Left ventricle myocardium superior (tissue), 1 donor: ENCODE measurements at regions of chr21 and their contacts with region 1.

Region 1: GRCh38 chr21:38805328-38806152 is at the start of gene ETS2:
- DNase-seq: peak; percentile 93
- ATAC-seq: peak; percentile 94
- total RNA-seq, gene ETS2: 43.8 TPM

Region 2: DNA sequence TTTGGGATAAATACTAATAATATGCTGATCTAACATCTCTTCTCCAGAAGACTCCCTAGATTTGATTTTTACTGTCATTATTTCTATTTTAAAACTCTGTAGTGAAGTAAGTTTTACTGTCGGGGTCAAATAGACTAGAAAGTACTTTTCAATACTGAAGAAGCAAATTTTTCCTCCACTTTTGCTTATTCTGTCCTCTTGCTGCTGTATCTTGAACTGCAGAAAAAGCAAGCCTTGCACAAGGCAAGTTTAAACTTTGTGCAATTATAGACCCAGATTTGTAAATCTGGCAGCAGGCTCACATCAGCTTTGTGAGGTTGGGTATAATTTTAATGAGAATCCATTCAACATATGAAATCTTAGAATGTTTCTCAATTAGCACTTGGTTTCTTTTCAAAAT is 151.0 kb before region 1 on chr21:
- intact Hi-C with region 1: no loop called
- DNase-seq: no peak
- ATAC-seq: no peak

Region 3: GRCh38 chr21:38743761-38744529 is 61.6 kb before region 1 on chr21:
- intact Hi-C with region 1: loop called (anchors 10 kb)
- DNase-seq: no peak
- ATAC-seq: peak; percentile 67

Region 4: DNA sequence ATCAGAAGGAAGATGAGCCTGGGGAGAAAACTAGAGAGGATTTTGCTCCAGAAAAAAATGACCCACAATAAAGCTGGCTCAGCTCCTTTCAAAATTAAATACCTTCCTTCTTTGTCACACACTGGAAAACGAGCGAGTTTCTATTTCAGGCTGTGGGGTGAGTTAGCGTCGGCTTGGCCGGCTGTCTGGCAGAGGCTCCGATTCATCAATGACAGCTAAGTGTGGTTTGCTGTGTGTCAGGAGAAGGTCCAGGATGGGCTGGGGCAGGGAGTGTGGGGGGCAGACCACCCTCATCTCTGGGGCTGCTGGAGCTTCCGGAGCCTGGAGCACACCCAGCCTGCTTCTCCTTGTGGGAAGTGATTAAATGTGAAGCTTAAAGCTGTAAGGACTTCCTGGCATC is 120.4 kb after region 1 on chr21:
- intact Hi-C with region 1: loop called (anchors 10 kb)
- DNase-seq: peak; percentile 72
- ATAC-seq: peak; percentile 92

Region 5: GRCh38 chr21:39125752-39126485 is 320.4 kb after region 1 on chr21:
- intact Hi-C with region 1: loop called (anchors 10 kb)
- DNase-seq: no peak
- ATAC-seq: peak; percentile 96